ENCODE measurements at regions of chr6 and their contacts with region 1.

Region 1: DNA sequence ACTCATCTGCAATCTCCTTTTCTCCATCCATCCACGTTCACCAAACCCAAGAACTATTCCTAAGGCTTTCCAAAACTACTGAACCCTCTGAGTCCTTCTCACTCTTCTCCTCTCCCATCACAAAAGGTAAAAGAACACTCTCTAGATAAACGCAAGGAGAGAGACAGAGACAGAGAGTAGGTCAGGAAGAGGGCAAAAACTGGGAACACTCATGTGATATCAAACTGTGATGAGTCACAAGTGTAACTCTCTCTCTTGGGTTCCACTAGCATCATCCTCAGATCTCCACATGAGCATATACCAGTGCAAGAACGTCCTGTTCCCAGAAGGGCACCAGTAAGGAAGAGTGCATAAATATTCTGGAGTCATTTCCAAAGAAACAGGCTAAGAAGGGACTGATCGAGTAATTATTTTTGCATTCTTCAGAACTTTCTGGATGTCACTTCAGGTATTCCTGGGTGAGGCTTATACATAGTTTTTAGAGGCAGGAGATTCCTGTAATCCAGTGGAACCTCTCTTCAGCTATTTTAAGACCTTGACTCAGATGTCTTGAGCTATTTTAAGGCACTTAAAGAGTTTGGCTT is 47.3 kb upstream of the STXBP5 start:
- DNase-seq: no peak
- ATAC-seq: peak; percentile 72 to 88
- H3K4me3 ChIP-seq: no peak overlapping the region
- H3K27ac ChIP-seq: no peak overlapping the region
- H3K4me1 ChIP-seq: peaks cover 0 to 7% of the 10 kb centered on the region in 2 donors
- H3K27me3 ChIP-seq: no peaks in the 10 kb centered on the region
- CTCF ChIP-seq: no peak
- POLR2A ChIP-seq: no peak

Region 2: GRCh38 chr6:147141711-147142308 is 15.1 kb before region 1 on chr6:
- in situ Hi-C with region 1: no loop called
- intact Hi-C with region 1: loop called (anchors 1 kb)
- DNase-seq: no peak
- ATAC-seq: no peak
- H3K4me3 ChIP-seq: no peak overlapping the region
- H3K27ac ChIP-seq: no peak overlapping the region
- H3K4me1 ChIP-seq: no peaks in the 10 kb centered on the region
- H3K27me3 ChIP-seq: no peaks in the 10 kb centered on the region
- CTCF ChIP-seq: no peak
- POLR2A ChIP-seq: no peak

Region 3: GRCh38 chr6:147390909-147391536 is 234.1 kb after region 1 on chr6:
- in situ Hi-C with region 1: no loop called
- intact Hi-C with region 1: no loop called
- DNase-seq: no peak
- ATAC-seq: no peak
- H3K4me3 ChIP-seq: no peak overlapping the region
- H3K27ac ChIP-seq: no peak overlapping the region
- H3K4me1 ChIP-seq: no peaks in the 10 kb centered on the region
- H3K27me3 ChIP-seq: no peaks in the 10 kb centered on the region
- CTCF ChIP-seq: peak in 1 of 5 experiments; percentile 17
- POLR2A ChIP-seq: no peak

Measured in gastrocnemius medialis (tissue), 4 donors.